ENCODE measurements at regions of chr11 and their contacts with region 1.

Region 1: GRCh38 chr11:64659417-64660144 is 63.4 kb downstream of the NRXN2 start:
- DNase-seq: peak; percentile 64 to 73
- ATAC-seq: peak; percentile 42 to 56
- H3K4me3 ChIP-seq: no peak overlapping the region
- H3K27ac ChIP-seq: peak overlapping the region; percentile 60 to 67
- H3K4me1 ChIP-seq: peaks cover 27% of the 10 kb centered on the region
- CTCF ChIP-seq: no peak
- EP300 ChIP-seq: no peak
- POLR2A ChIP-seq: no peak
- RAD21 ChIP-seq: 0 out of 5 replicates have a peak, but pooled peaks of 1 of the 2 experiments have one; percentile 2

Region 2: DNA sequence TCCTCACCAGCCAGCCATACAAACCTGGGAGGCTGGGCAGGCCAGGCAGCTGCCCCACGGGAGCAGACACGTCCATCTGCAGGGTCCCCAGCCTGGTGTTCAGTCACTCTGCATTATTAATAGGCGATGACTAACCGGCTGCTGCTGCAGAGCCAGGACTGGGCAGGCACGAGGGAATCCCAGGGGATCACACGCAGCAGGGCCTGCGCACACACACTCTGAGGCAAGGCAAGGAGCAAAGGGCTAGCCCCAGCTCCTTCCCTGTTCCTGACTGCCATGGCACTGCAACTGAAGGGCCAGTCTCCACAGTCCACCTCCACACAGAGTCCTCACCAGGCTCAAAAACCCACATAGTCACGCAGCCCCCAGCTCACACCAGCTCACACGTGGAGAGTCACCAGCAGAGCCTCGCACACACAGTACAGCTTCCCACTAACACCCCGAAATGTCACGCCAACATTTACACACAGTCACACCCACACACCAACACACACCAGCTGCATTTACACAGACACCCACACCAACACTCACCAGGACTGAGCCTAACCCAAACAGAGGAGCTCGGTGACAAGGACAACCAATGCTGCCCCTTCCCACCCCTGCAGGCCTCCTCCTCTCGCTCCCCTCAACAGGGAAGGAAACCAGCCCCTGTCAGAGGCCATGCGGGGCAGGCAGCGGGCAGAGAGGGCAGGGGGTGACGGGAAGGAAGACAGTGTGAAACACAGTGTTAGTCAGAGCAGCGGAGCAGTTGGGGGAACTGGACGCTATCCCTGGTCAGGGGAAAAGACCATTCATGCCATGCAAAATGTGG is 16.1 kb after region 1 on chr11:
- CTCF ChIA-PET with region 1: interaction called, 175 read pairs
- POLR2A ChIA-PET with region 1: interaction called, 3 read pairs
- DNase-seq: peak; percentile 61 to 64
- ATAC-seq: peak; percentile 84 to 91
- H3K4me3 ChIP-seq: no peak overlapping the region
- H3K27ac ChIP-seq: peak overlapping the region in 1 of 2 experiments; percentile 68; a peak in 3 of 6 replicates
- H3K4me1 ChIP-seq: peaks cover 12% of the 10 kb centered on the region
- CTCF ChIP-seq: no peak
- EP300 ChIP-seq: no peak
- POLR2A ChIP-seq: no peak
- RAD21 ChIP-seq: no peak

Region 3: DNA sequence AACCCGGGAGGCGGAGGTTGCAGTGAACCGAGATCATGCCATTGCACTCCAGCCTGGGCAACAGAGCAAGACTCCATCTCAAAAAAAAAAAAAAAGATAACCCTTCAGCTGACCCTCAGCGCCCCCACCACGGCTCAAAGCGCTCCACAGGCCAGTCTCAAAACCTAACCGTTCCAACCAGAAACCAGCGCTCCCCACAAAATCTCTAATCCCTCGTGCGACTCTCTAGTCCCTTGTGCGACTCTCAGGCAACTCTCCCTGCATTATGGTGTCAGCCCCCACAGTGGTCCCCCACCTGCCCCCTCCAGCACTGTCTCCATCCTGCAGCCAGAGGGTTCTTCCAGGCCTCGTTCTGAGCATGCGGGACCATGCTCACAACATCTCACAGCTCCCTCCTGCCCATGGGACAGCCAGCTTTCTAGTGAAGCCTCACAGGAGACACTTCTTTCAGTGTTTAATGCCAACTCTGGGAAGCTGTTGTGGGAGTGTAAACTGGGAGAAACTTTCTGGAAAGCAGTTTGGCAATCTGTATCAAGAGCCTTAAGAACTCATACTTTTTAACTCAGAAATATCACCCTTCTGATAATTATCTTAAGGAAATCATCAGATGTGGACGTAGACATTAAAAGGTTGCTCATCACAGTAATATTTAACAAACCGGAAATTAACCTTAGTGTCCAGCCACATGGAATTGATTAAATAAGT is 88.5 kb after region 1 on chr11:
- CTCF ChIA-PET with region 1: no interaction called
- POLR2A ChIA-PET with region 1: no interaction called
- DNase-seq: no peak
- ATAC-seq: no peak
- H3K4me3 ChIP-seq: no peak overlapping the region
- H3K27ac ChIP-seq: no peak overlapping the region
- H3K4me1 ChIP-seq: peaks cover 24% of the 10 kb centered on the region
- CTCF ChIP-seq: no peak
- EP300 ChIP-seq: no peak
- POLR2A ChIP-seq: no peak
- RAD21 ChIP-seq: no peak